Aorta (tissue), 5 donors: ENCODE measurements at regions of chr2 and their contacts with region 1.

Region 1: GRCh38 chr2:11688222-11689069 is 18.5 kb upstream of the NTSR2 start:
- DNase-seq: peak; percentile 92 to 95
- ATAC-seq: peak; percentile 88
- H3K4me3 ChIP-seq: no peak overlapping the region
- H3K27ac ChIP-seq: peak overlapping the region in 1 of 2 donors; percentile 2
- H3K4me1 ChIP-seq: no peaks in the 10 kb centered on the region
- H3K27me3 ChIP-seq: no peaks in the 10 kb centered on the region

Region 2: GRCh38 chr2:11477994-11478393 is 210.5 kb before region 1 on chr2:
- intact Hi-C with region 1: loop called (anchors 10 kb)
- DNase-seq: peak; percentile 91 to 93
- ATAC-seq: peak; percentile 66
- H3K4me3 ChIP-seq: no peak overlapping the region
- H3K27ac ChIP-seq: no peak overlapping the region
- H3K4me1 ChIP-seq: no peaks in the 10 kb centered on the region
- H3K27me3 ChIP-seq: no peaks in the 10 kb centered on the region

Region 3: DNA sequence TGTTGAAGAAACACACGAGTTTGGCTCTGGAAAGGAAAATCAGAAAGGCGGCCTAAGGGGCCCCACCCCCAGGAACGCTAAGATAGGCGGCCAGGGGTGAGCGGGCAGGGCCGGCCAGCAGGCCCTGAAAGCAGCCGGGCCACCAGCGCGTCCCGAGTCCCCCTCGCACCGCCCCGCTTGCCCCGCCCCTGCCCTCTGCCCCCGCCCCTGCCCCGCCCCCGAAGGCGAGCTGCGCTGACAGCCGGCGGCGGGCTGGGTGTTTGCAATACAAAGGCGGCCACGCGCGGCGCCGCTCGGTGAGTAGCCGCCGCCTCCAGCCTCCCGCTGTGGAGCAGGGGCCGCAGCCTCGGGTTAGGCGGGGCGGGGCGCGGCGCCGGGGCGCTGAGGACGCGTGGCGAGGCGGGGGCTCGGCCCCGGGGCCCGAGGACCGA is 57.9 kb after region 1 on chr2 and contains the start of gene LPIN1:
- intact Hi-C with region 1: loop called in 1 of 2 experiments (anchors 2 kb)
- DNase-seq: peak; percentile 91 to 96
- ATAC-seq: peak; percentile 92
- H3K4me3 ChIP-seq: peak within 1 kb of the TSS; percentile 44 to 95
- H3K27ac ChIP-seq: peak within 1 kb of the TSS in 1 of 2 donors; percentile 65
- H3K4me1 ChIP-seq: peaks cover 0 to 5% of the 10 kb centered on the region in 2 donors
- H3K27me3 ChIP-seq: no peaks in the 10 kb centered on the region
- total RNA-seq, gene LPIN1: 32.8 to 54.0 TPM

Region 4: DNA sequence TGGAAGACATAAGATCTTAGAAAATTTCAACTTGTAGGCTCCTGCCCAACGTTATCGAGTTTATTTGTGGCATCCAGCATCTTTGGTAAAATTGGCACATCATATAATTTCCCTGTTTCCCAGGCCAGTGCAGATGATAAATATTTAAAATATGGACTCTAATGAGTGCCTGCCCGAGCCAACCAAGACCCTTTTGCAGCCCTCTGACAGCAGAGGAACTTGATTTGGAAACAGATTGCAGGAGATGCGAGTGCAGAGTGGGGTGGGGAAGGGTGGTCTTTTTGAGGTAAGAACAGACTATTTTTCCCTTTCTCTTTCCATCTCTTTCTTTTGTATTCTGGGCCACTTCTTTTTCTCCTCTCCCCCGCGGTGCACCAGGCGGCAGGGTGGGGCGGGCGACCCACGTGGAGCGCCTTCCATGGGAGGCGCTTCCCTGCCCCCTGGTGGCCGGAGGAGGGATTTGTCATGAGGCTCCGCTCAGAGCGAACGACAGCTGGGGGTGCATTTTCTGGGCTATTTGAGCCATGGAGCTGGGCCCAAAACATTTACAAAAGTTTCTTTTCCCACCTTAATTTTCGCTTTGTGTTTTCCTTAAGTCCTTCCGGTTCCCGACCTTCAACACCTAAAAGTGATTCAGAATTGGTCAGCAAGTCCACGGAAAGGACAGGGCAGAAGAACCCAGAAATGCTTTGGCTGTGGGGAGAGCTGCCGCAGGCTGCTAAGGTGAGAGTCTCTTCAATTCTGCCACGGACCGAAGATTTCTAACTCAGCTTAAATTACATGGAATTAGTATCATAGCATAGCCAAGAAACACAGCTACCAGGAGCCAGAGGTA is 90.7 kb after region 1 on chr2:
- intact Hi-C with region 1: loop called (anchors 2 to 5 kb)
- DNase-seq: peak; percentile 83 to 94
- ATAC-seq: peak; percentile 94
- H3K4me3 ChIP-seq: no peak overlapping the region
- H3K27ac ChIP-seq: no peak overlapping the region
- H3K4me1 ChIP-seq: no peaks in the 10 kb centered on the region
- H3K27me3 ChIP-seq: no peaks in the 10 kb centered on the region